GM10248 (cell line): ENCODE measurements at regions of chr6 and their contacts with region 1.

Region 1: GRCh38 chr6:108541838-108542759 is 18.6 kb upstream of the FOXO3 start:
- DNase-seq: peak; percentile 61
- CTCF ChIP-seq: peak; percentile 85

Region 2: DNA sequence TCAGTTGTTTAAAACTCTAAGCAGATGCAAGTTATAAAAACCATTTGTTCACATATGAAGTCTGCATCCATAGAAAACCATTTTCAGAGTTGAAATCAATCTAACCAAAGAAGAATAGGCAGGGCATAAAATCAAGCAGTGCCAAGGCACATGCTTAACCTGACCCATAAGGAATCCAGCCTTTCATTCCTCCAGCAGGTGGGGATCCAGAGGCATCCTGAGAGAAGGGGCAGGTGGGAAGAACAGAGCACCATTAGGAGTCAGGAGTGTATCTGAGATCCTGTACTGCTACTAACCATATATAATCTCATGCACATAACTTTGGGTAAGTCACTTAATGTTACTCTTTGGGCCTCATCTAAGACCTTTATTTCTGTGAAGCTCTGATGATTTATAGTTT is 10.8 kb before region 1 on chr6:
- CTCF ChIA-PET with region 1: interaction called, 16 read pairs
- POLR2A ChIA-PET with region 1: no interaction called
- DNase-seq: no peak
- CTCF ChIP-seq: no peak

Region 3: DNA sequence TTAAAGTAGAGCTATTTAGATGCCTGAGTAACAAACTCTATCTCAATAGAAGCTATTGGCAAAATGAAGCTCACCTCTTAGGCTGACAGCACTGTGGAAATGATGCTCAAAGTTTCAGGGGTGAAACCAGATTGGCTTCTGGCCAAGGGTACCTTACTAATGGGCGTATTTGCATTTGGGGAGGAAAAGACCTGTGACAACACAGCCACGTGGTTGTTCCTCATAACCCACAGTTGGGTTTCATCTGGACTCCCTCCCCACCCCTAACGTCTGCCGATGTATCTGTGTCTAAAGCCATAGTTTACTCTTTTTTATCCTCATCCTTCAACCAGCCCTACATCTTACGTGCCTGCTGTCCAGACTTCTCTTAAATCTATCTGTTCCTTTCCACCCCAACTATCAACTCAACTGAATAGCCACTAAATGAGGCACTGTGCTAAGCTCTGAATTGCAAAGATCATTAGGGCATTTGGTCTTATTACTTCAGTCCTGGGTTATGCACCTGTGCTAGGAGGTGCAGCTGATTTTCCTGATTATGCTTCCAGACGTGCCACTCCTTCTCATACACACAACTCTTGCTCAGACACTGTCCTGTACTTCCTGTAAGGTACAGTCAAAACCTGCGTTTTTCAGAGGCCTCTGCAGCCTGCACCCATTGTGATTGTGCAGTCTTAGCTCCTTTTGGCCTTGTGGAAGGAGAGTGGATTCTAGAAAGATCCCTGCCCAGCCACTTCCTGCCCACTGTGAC is 225.5 kb after region 1 on chr6:
- CTCF ChIA-PET with region 1: interaction called, 12 read pairs
- POLR2A ChIA-PET with region 1: no interaction called
- DNase-seq: no peak
- CTCF ChIP-seq: no peak

Region 4: DNA sequence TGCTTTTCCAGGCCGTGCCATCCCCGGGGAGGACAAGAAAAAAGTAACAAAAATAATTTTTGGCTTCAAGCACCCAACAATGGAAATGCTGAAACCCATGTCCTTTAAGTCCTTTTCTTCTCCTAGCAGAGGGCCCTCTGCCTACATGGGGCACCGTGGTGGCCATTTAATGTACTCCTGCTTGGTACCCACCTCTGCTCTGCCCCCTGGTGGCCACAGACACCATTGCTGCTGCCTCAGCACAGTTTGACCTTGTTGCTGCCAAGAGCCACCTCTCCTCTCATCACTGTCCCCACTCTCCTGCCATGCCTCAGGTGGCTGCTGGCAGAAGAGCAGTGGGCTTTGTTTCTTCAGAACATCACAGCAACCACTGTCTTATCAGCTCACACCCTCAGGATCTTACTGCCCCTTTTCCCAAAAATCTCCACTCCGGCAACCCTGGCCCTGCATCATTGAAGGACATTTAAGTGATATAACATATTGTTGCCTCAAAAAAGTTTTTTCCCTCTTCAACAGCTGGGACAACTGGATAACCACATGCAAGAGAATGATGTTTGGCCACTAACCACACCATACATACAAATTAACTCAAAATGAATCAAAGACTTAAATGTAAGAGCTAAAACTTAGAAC is 293.2 kb after region 1 on chr6:
- CTCF ChIA-PET with region 1: interaction called, 16 read pairs
- POLR2A ChIA-PET with region 1: no interaction called
- DNase-seq: peak; percentile 77
- CTCF ChIP-seq: peak; percentile 84

Region 5: GRCh38 chr6:108896111-108896661 is 354.1 kb after region 1 on chr6:
- CTCF ChIA-PET with region 1: interaction called, 37 read pairs
- POLR2A ChIA-PET with region 1: no interaction called
- DNase-seq: no peak
- CTCF ChIP-seq: no peak

Region 6: DNA sequence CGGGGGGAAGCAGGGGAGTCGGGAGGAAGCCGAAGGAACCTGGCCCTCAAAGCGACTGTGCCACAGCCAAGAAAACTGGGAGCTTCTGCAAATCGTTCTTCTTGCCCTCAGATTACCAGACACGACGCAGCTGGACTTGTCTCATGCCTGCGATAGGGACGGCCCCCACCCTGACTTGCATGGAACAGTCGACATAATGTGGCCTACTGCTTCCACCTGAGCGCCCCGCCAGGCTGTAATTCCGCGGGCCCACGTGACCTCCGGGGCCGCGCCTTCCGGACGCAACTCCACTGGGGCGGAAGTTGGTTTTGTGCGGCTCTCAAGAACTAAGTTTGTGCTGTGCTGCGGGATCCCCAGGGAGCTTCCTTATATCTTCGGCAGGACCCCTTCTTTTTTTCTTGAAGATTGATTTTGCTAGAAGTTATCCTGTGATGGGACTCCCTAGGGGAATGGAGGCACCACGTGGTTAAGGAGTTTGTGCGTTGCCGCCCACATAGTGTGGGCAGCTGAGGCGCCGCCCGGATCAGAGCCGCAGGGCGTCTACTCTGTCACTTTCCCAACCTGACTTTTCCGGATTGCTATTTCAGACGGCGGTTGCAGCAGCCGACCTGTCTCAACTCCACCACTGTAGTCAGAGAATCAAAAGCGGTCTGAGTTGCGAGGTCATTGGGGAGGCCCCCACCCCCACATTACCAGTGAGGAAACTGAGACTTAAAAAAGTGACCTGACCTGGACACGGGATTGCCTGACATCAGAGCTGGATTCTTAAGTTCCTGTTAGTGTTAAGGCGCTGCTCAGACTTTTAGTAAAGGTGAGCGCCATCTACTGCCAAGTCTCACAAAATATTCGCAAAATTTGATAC is 840.7 kb after region 1 on chr6:
- CTCF ChIA-PET with region 1: interaction called, 12 read pairs
- POLR2A ChIA-PET with region 1: no interaction called
- DNase-seq: peak; percentile 90
- CTCF ChIP-seq: peak; percentile 50